Endothelial cell of umbilical vein (primary cell): ENCODE measurements at regions of chr5 and their contacts with region 1.

Region 1: GRCh38 chr5:169980418-169981053 is at the start of gene INSYN2B:
- DNase-seq: peak; percentile 96
- H3K4me3 ChIP-seq: peak within 1 kb of the TSS; percentile 47 to 99 (median 97)
- H3K27ac ChIP-seq: peak within 1 kb of the TSS; percentile 97
- H3K4me1 ChIP-seq: peaks cover 41% of the 10 kb centered on the region
- H3K27me3 ChIP-seq: no peaks in the 10 kb centered on the region
- CTCF ChIP-seq: peak; percentile 65 to 66
- POLR2A ChIP-seq: peak; percentile 59
- total RNA-seq, gene INSYN2B: 8.2 and 9.9 TPM in 2 replicates

Region 2: DNA sequence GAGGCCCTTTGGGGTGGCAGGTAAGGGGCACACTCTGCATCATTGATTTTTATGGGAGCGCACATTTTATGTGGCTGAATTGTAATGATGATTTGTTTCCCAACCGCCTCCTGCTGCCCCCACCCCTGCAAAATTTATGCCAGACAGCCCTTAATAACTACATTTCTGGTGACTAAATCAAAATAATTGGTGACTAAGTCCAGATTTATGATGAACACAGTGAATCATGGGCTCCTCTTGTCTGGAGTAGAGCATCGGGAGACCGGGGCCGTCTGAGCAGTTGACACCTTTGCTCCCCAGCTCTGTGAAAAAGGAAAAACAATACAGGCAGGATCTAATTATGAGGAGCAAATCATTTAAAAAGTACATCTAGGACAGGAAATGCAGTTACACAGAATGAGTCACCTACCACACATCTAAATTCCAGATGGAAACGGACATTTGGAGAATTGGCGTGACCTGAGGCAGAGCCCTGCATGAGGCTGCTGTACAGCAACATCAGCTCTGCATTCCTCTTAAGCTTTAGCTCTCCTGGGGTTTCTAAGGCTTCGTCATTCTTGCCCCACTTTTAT is 284.5 kb before region 1 on chr5:
- CTCF ChIA-PET with region 1: interaction called, 180 read pairs
- POLR2A ChIA-PET with region 1: no interaction called
- dilution Hi-C with region 1: no loop called
- intact Hi-C with region 1: loop called (anchors 1 kb)
- DNase-seq: peak; percentile 96
- H3K4me3 ChIP-seq: no peak overlapping the region
- H3K27ac ChIP-seq: peak overlapping the region; percentile 98
- H3K4me1 ChIP-seq: peaks cover 30% of the 10 kb centered on the region
- H3K27me3 ChIP-seq: no peaks in the 10 kb centered on the region
- CTCF ChIP-seq: no peak
- POLR2A ChIP-seq: peak; percentile 74

Region 3: DNA sequence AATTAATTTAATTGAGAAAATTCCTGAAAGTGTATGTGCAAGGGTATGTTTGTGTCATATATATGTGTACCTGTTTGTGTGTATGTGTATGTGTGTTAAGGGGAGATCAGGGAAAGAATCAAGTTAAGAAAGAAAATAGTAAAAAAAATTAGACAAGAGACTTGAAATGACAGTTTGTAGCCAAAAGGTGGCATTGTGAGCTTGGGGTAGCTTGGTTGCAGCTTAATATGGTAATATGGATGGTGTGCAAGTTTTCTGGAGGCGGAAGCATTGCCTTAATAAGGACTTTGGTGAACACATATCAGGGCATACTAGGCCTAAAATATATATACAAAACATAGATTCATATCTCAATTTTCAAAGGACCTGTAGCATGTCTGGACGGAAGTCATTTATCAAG is 130.1 kb before region 1 on chr5:
- CTCF ChIA-PET with region 1: interaction called, 24 read pairs
- POLR2A ChIA-PET with region 1: no interaction called
- dilution Hi-C with region 1: no loop called
- intact Hi-C with region 1: no loop called
- DNase-seq: no peak
- H3K4me3 ChIP-seq: no peak overlapping the region
- H3K27ac ChIP-seq: no peak overlapping the region
- H3K4me1 ChIP-seq: no peaks in the 10 kb centered on the region
- H3K27me3 ChIP-seq: no peaks in the 10 kb centered on the region
- CTCF ChIP-seq: peak; percentile 9 to 13
- POLR2A ChIP-seq: no peak

Region 4: GRCh38 chr5:169895926-169896325 is 84.6 kb before region 1 on chr5:
- CTCF ChIA-PET with region 1: interaction called, 20 read pairs
- POLR2A ChIA-PET with region 1: no interaction called
- dilution Hi-C with region 1: no loop called
- intact Hi-C with region 1: no loop called
- DNase-seq: no peak
- H3K4me3 ChIP-seq: no peak overlapping the region
- H3K27ac ChIP-seq: no peak overlapping the region
- H3K4me1 ChIP-seq: peaks cover 8% of the 10 kb centered on the region
- H3K27me3 ChIP-seq: no peaks in the 10 kb centered on the region
- CTCF ChIP-seq: no peak
- POLR2A ChIP-seq: no peak

Region 5: DNA sequence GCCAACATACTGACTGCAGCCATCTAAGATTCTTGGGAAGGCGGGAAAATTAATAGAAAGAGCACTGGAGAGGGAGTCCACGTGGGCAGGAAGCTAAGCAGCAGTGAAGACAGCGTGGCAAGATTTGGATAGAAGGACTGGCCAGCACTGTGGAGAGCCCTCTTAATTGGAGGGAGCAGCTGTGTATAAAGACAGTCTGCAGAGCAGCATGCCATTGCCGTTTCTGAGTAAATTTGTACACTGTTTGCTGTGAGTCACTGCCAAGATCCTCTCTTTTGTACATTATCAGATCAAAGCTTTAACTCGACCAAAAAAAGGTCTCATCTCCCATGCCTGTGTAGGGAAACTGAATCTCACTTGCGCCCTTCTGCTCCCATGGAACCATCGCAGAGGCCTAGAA is 45.5 kb before region 1 on chr5:
- CTCF ChIA-PET with region 1: interaction called, 18 read pairs
- POLR2A ChIA-PET with region 1: no interaction called
- dilution Hi-C with region 1: no loop called
- intact Hi-C with region 1: loop called (anchors 1 kb)
- DNase-seq: no peak
- H3K4me3 ChIP-seq: no peak overlapping the region
- H3K27ac ChIP-seq: no peak overlapping the region
- H3K4me1 ChIP-seq: peaks cover 9% of the 10 kb centered on the region
- H3K27me3 ChIP-seq: no peaks in the 10 kb centered on the region
- CTCF ChIP-seq: no peak
- POLR2A ChIP-seq: no peak

Region 6: GRCh38 chr5:170006021-170006420 is 25.5 kb after region 1 on chr5:
- CTCF ChIA-PET with region 1: no interaction called
- POLR2A ChIA-PET with region 1: no interaction called
- dilution Hi-C with region 1: no loop called
- intact Hi-C with region 1: no loop called
- DNase-seq: no peak
- H3K4me3 ChIP-seq: no peak overlapping the region
- H3K27ac ChIP-seq: no peak overlapping the region
- H3K4me1 ChIP-seq: no peaks in the 10 kb centered on the region
- H3K27me3 ChIP-seq: peaks cover 0 to 11% of the 10 kb centered on the region in 2 experiments
- CTCF ChIP-seq: no peak
- POLR2A ChIP-seq: no peak

Region 7: DNA sequence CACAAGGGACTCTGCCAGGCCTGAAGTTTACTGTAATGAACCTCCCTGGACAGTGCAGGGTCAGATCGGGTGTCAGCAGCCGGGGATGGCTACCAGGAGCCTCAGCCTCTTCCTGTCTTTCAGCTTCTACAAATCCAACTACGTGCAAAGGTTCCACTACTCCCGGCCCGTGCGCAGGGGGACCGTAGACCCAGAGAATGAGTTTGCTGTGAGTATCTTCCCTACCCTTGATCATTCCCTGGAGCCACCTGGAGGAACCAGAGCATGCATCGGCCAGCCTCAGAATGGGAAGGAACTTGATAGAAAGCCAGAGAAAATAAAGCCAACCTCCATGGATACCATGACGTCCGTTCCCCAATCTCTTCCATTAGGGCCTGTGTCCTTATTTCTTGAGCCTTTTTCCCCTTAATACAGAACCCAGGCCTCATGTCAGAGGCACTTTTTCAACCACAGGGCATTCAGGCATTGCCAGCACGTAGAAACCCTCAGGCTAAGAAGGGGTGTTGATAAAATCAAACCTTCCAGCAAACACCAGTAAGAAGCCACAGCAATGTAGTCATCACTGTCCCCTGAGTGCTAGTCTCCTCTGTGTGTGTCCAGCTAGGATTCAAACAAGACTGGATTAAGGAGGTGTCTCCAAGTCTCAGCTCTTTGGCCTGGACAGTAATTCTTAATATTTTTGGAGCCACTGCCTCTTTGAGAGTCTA is 76.2 kb after region 1 on chr5:
- CTCF ChIA-PET with region 1: interaction called, 10 read pairs
- POLR2A ChIA-PET with region 1: no interaction called
- dilution Hi-C with region 1: no loop called
- intact Hi-C with region 1: loop called (anchors 5 kb)
- DNase-seq: peak; percentile 5
- H3K4me3 ChIP-seq: no peak overlapping the region
- H3K27ac ChIP-seq: no peak overlapping the region
- H3K4me1 ChIP-seq: peaks cover 14% of the 10 kb centered on the region
- H3K27me3 ChIP-seq: no peaks in the 10 kb centered on the region
- CTCF ChIP-seq: no peak
- POLR2A ChIP-seq: no peak

Region 8: DNA sequence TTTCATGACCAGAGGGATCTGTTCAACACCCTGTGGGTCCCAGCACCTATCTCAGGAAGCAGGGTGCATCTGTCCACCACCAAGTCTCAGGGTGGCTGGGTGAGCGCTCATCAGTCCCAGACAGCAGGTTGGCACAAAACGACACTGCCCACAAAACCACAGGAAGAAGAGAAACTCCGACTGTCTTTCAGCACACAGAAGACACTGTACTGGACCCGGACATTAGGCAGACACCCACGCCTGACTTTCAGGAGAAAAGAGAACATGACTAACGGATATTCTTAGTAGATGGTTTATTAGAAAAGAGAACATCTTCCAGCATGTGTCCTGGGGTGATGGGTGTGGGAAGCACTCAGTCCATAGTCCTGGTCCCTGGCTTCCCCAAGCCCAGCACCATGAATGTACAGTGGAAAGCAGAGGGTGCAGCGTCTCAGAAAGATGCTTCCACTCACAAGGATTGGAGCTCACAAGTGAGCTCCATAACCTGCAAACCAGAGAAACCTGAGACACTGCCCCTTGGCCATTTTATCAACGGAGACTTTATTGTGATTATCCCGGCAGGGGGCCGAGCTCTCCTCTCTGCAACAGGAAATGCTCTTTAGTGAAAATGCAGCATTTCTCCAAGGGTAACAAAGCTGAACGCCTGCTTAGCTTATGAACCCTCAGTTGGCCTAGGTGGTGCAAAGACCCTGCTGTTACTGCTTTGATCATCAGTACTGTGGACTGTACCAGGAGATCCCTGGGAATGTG is 352.8 kb after region 1 on chr5:
- CTCF ChIA-PET with region 1: no interaction called
- POLR2A ChIA-PET with region 1: no interaction called
- dilution Hi-C with region 1: no loop called
- intact Hi-C with region 1: no loop called
- DNase-seq: no peak
- H3K4me3 ChIP-seq: no peak overlapping the region
- H3K27ac ChIP-seq: no peak overlapping the region
- H3K4me1 ChIP-seq: peaks cover 14% of the 10 kb centered on the region
- H3K27me3 ChIP-seq: peaks cover 0 to 2% of the 10 kb centered on the region in 2 experiments
- CTCF ChIP-seq: no peak
- POLR2A ChIP-seq: no peak